Activated CD4-positive, alpha-beta T cell treated with anti-CD3 and anti-CD28 coated beads, Interleukin-2, amount 10 ng/mL, durations not matched to agents 7 days and 5 days (primary cell): ENCODE measurements at regions of chr22 and their contacts with region 1.

Region 1: DNA sequence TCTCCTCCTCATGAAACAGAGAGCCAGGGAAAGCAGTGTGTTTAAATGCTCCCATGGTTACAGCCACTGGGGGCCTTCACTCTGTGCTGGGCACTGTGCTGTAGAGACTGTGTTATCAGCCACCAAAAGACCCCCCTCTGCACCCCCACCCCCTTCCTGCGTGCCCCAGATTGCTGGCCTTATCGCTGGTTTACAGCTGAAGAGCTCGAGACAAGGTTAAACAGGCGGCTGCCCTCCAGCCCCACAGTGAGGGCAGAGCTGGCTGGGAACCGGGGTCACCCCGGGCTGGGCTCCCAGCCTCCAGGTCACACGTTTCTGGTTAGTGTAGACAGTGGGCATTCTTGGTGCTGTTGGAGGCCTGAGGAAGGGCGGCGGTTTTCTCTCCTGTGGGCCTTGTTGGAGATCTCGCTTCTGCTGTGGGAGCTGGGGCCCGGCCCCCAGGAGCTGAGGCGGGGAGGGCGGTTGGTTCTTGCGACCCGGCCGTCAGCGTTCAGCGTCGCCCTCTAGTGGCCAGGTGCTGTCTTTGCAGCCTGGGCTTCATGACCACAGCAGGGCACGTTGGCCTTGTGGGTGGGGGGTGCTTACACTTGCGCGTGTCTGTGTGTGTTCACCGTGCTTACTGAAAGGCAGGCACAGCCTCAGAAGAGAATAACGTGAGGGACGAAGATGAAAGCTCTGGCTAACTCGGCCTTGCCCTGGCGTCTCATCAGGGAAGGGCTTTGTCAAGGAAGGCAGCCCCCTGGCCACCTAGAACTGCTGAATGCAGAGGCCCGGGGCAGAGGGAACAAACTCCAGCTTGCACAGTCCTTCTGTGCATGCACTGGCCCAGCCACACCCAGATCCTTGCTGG is 40.8 kb downstream of the TBC1D22A start:
- DNase-seq: peak; percentile 73
- H3K4me3 Mint-ChIP-seq: no peak overlapping the region
- H3K27ac Mint-ChIP-seq: peak overlapping the region; percentile 38
- H3K4me1 Mint-ChIP-seq: peaks cover 44% of the 10 kb centered on the region
- H3K27me3 Mint-ChIP-seq: no peaks in the 10 kb centered on the region

Region 2: DNA sequence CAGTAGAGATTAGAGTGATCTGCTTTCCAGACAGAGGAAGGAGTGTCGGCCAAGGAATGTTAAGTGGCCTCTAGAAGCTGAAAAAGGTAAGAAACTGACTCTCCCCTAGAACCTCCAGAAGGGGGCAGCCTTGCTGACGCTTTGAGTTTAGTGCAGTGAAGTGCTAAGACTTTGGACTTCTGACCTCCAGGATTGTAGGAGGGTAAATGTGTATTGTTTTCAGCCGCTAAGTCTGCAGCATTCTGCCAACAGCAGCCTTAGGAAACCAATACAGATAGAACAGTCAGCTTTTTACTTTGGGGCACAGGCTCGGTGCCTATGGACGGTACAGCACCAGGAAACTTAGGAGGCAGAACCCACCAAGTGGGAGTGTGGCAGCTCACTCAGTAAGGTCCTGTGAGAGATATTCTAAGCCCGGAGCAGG is 44.4 kb before region 1 on chr22:
- CTCF ChIA-PET with region 1: interaction called, 29 read pairs
- POLR2A ChIA-PET with region 1: interaction called, 3 read pairs
- DNase-seq: peak; percentile 68
- H3K4me3 Mint-ChIP-seq: no peak overlapping the region
- H3K27ac Mint-ChIP-seq: no peak overlapping the region
- H3K4me1 Mint-ChIP-seq: peaks cover 40% of the 10 kb centered on the region
- H3K27me3 Mint-ChIP-seq: no peaks in the 10 kb centered on the region

Region 3: DNA sequence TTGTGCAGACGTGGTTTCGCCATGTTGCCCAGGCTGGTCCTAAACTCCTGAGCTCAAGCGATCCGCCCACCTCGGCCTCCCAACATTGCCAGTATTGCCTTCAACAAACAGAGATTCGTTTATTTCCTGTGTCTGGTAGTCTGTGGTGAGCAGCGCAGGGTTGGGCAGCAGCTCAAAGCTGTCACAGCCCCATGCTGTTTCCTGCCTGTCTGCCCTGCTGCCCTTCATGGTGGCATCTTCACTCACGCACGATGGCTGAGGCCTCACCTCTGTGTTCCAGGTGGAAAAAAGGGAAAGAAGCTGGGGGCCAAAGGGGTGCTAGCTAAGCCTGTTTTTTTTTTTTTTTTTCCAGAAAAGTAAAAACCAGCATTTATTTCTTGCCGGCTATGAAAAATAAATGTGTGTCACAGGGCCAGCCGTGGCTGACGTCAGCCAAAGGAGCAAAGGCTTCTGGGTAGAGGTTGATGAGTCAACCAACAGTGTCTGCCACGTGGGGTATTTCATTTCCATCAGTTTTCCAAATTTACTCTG is 12.0 kb before region 1 on chr22:
- CTCF ChIA-PET with region 1: interaction called, 35 read pairs
- POLR2A ChIA-PET with region 1: no interaction called
- DNase-seq: peak; percentile 83
- H3K4me3 Mint-ChIP-seq: peak overlapping the region; percentile 74
- H3K27ac Mint-ChIP-seq: peak overlapping the region; percentile 100
- H3K4me1 Mint-ChIP-seq: peaks cover 58% of the 10 kb centered on the region
- H3K27me3 Mint-ChIP-seq: no peaks in the 10 kb centered on the region